HepG2 (cell line): ENCODE measurements at regions of chr13 and their contacts with region 1.

Region 1: GRCh38 chr13:97221989-97222700 is at the start of gene MBNL2:
- DNase-seq: peak; percentile 90
- ATAC-seq: peak; percentile 96
- H3K4me3 ChIP-seq: peak within 1 kb of the TSS; percentile 78 to 95 (median 82)
- H3K27ac ChIP-seq: peak within 1 kb of the TSS; percentile 92
- H3K4me1 ChIP-seq: peaks cover 51% of the 10 kb centered on the region
- H3K27me3 ChIP-seq: no peaks in the 10 kb centered on the region; a peak in 1 of 5 replicates
- CTCF ChIP-seq: no peak
- EP300 ChIP-seq: peak in 1 of 2 experiments; percentile 37; a peak in 1 of 4 replicates
- POLR2A ChIP-seq: peak; percentile 71 to 87; a peak in 3 of 4 replicates
- RAD21 ChIP-seq: no peak
- total RNA-seq, gene MBNL2: 30.8 and 48.1 TPM in 2 replicates

Region 2: GRCh38 chr13:96796091-96796633 is 426.0 kb before region 1 on chr13:
- CTCF ChIA-PET with region 1: no interaction called
- POLR2A ChIA-PET with region 1: no interaction called
- in situ Hi-C with region 1: no loop called
- intact Hi-C with region 1: no loop called
- DNase-seq: no peak
- ATAC-seq: no peak
- H3K4me3 ChIP-seq: no peak overlapping the region
- H3K27ac ChIP-seq: no peak overlapping the region
- H3K4me1 ChIP-seq: no peaks in the 10 kb centered on the region
- H3K27me3 ChIP-seq: peaks cover 0 to 1% of the 10 kb centered on the region in 2 experiments; a peak in 2 of 5 replicates
- CTCF ChIP-seq: no peak
- EP300 ChIP-seq: no peak
- POLR2A ChIP-seq: no peak
- RAD21 ChIP-seq: no peak

Region 3: DNA sequence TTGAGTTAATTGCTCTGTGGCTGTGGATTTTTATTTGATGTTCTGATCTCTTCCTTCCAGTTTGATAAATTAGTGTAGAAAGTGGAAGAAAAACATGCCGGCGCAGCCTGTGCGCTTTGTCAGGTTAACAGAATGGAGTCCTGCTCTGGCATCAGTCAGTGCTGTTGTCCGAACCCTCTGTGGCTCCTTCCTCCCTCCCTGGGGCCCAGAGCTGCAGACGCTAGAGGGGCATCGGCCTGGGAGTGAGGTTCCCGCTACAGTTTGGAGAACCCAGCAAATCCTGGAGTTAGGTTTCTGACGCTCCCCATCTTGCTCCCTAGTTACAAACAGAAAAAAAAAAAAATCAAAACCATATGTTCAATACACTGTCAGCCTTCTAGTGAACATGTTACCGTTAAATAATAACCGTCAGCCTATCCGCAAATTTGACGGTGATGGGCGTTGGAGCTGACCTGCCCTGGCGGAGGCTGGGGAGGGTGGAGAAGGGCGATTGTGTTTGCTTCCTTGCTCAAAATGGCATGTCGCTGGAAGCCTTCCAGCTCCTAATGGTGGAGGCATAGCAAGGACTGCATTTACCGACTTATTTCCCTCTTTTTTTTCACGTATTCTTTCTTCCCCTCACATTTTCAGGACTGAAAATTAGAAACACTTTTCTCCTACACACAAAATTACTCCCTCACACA is 13.5 kb after region 1 on chr13:
- CTCF ChIA-PET with region 1: no interaction called
- POLR2A ChIA-PET with region 1: interaction called, 15 read pairs
- in situ Hi-C with region 1: no loop called
- intact Hi-C with region 1: loop called (anchors 2 kb)
- DNase-seq: no peak
- ATAC-seq: no peak
- H3K4me3 ChIP-seq: no peak overlapping the region
- H3K27ac ChIP-seq: no peak overlapping the region
- H3K4me1 ChIP-seq: peaks cover 99% of the 10 kb centered on the region
- H3K27me3 ChIP-seq: no peaks in the 10 kb centered on the region
- CTCF ChIP-seq: no peak
- EP300 ChIP-seq: no peak
- POLR2A ChIP-seq: no peak
- RAD21 ChIP-seq: no peak

Region 4: GRCh38 chr13:97249796-97250495 is 27.8 kb after region 1 on chr13:
- CTCF ChIA-PET with region 1: no interaction called
- POLR2A ChIA-PET with region 1: interaction called, 10 read pairs
- in situ Hi-C with region 1: no loop called
- intact Hi-C with region 1: no loop called
- DNase-seq: no peak
- ATAC-seq: no peak
- H3K4me3 ChIP-seq: no peak overlapping the region
- H3K27ac ChIP-seq: no peak overlapping the region
- H3K4me1 ChIP-seq: peaks cover 63% of the 10 kb centered on the region
- H3K27me3 ChIP-seq: no peaks in the 10 kb centered on the region
- CTCF ChIP-seq: no peak
- EP300 ChIP-seq: no peak
- POLR2A ChIP-seq: no peak
- RAD21 ChIP-seq: no peak

Region 5: GRCh38 chr13:97275265-97275664 is 53.1 kb after region 1 on chr13:
- CTCF ChIA-PET with region 1: no interaction called
- POLR2A ChIA-PET with region 1: interaction called, 12 read pairs
- in situ Hi-C with region 1: no loop called
- intact Hi-C with region 1: loop called (anchors 1 kb)
- DNase-seq: peak; percentile 57
- ATAC-seq: peak; percentile 67
- H3K4me3 ChIP-seq: peak overlapping the region in 1 of 3 experiments; percentile 39; a peak in 1 of 6 replicates
- H3K27ac ChIP-seq: peak overlapping the region; percentile 86
- H3K4me1 ChIP-seq: peaks cover 98% of the 10 kb centered on the region
- H3K27me3 ChIP-seq: no peaks in the 10 kb centered on the region
- CTCF ChIP-seq: no peak
- EP300 ChIP-seq: no peak; a peak in 1 of 4 replicates
- POLR2A ChIP-seq: no peak
- RAD21 ChIP-seq: no peak

Region 6: DNA sequence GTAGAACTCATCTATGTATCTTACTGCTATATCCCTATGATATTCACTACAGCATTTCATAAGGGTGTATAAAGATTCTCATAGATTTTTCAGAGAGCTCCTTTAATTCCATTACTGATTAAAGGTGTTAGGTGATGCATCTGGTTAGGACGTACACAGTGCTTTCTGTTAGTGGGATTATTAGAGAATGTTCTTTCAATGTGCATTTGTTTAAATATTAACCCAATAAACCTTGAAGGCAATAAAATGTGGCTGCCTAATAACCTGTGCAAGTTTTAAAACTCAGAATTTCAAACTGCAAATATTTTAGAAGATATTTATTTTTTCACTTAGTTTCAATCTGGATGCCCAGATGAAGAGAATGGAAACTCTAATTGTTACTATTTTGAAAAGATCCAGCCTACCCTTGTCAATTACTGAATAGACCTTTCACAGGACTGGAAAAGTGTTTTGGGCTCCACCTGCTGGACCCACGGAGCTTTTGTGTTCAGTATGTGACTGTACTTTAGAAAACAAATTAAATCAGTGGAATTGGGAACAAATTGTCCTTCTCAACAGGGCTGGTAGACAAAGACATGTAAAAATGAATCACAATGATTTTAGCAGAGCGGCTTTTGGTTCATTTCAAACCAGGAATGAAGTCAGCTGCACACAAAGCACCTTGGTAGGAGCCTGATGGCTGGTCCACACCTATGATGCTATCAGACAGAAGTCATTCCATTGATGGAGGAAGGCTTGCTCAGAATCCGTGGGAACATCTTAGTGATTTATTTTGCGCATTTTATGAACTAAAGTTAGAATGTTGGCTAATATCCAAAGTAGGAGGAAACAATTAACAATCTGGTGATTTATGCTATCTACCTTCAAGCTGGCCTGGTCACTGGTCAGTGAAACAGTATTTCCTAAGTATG is 122.4 kb after region 1 on chr13:
- CTCF ChIA-PET with region 1: no interaction called
- POLR2A ChIA-PET with region 1: interaction called, 5 read pairs
- in situ Hi-C with region 1: loop called (anchors 10 kb)
- intact Hi-C with region 1: loop called (anchors 2 kb)
- DNase-seq: peak; percentile 62
- ATAC-seq: peak; percentile 87
- H3K4me3 ChIP-seq: no peak overlapping the region
- H3K27ac ChIP-seq: no peak overlapping the region
- H3K4me1 ChIP-seq: peaks cover 18% of the 10 kb centered on the region
- H3K27me3 ChIP-seq: no peaks in the 10 kb centered on the region
- CTCF ChIP-seq: peak; percentile 73
- EP300 ChIP-seq: no peak
- POLR2A ChIP-seq: no peak
- RAD21 ChIP-seq: peak; percentile 30; the same call in 1 of the 2 replicates